ENCODE measurements at regions of chr20 and their contacts with region 1.

Region 1: DNA sequence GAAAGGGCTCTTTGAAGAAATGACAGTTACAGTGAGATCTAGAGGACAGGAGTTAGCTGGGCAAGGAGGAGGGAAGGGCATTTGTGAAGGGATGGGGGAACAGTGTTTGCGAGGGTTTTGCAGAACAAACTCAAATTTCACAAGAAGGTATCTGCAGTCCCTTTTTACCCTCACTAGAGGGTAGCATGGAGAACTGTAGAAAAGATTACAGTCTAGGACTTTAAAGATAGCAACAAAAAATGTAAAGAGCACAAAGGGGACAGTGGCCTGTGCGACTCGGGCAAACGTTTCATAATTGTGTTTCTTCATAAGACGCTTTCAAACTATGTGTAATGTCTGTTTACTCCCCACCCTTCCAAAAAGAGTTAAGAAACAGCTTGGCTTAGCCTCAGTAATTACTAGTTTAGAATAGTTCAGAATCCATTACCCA is 21.2 kb upstream of the ASXL1 start:
- DNase-seq: no peak
- ATAC-seq: no peak
- H3K4me3 ChIP-seq: no peak overlapping the region
- H3K27ac ChIP-seq: no peak overlapping the region
- H3K4me1 ChIP-seq: peaks cover 4 to 46% (median 28%) of the 10 kb centered on the region in 12 donors
- H3K27me3 ChIP-seq: no peaks in the 10 kb centered on the region
- CTCF ChIP-seq: peak; percentile 30 to 67 (median 49)
- POLR2A ChIP-seq: no peak

Region 2: DNA sequence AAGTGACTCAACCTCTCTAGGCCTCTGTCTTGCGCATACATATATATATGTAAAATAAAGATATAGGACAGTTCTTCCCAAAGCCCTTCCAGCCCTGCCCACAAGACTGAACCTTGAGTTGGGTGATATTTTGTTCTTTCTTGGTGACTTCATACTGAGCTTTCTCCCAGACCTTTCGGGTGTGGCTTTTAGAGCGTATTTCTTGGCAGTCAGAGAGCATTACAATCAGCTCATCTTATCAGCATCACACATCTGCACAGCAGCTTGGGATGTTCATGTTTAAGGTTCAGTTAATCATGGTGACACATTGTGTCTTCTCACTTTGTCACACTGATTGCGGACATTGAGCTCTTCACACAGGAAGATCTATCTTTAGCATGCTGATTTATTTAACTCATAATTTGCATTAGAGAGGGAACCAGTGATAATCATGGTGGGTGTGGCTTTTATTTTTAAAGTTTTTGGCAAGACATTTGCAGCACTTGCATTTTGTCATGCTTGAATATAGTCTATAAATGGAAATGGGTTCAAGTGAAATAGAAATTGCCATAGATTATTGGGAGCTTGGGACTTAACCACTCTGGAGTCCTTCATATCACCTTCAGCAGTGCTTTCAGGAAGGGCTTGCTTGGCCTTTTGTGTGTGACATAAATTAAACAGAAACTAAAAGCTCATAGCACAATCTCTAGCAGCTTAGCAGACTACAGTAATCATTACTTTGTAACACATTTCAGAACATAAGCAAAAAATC is 51.1 kb before region 1 on chr20:
- intact Hi-C with region 1: loop called in 3 of 10 experiments (anchors 5 to 10 kb)
- DNase-seq: peak in 2 of 5 donors; percentile 13 to 20
- ATAC-seq: peak; percentile 62 to 84 (median 64)
- H3K4me3 ChIP-seq: peak overlapping the region in 4 of 12 donors; percentile 1 to 10 (median 9)
- H3K27ac ChIP-seq: peak overlapping the region in 11 of 12 donors; percentile 45 to 82 (median 61)
- H3K4me1 ChIP-seq: peaks cover 3 to 39% (median 26%) of the 10 kb centered on the region in 12 donors
- H3K27me3 ChIP-seq: no peaks in the 10 kb centered on the region
- CTCF ChIP-seq: no peak
- POLR2A ChIP-seq: no peak

Region 3: DNA sequence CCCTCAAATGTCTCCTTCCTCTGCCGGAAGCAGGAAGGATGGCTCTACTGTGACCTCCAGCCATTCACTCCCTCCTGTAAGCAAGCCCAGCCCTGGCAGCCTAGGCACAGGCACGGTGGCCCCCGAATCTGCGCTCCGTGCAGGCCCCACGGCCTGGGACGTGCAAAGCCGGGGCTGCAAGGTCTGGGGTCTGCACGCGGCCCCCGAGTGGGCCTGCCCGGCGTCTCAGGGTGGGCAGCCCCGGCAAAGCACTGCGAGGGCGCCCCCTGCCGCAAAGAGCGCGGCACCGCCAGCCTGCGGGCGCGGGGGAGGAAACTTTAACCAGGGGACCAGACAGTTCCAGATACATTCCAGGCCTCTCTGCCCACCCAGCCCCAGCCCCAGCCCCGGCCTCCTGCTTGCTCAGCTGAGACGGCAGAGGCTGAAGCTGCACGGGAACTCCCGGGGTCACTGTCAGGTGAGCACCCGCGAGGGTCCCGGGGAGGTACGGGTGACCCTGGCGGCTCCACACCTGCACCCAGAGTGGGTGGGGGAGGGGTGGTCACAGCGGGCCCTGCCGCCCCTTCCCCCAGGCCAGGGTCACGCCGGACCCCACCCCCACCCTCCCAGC is 120.0 kb after region 1 on chr20:
- intact Hi-C with region 1: loop called in 5 of 10 experiments (anchors 2 to 10 kb)
- DNase-seq: peak in 2 of 5 donors; percentile 55 to 69
- ATAC-seq: peak; percentile 45 to 74 (median 56)
- H3K4me3 ChIP-seq: peak overlapping the region; percentile 19 to 72 (median 55)
- H3K27ac ChIP-seq: peak overlapping the region in 4 of 12 donors; percentile 24 to 64 (median 42)
- H3K4me1 ChIP-seq: peaks cover 0 to 22% (median 16%) of the 10 kb centered on the region in 12 donors
- H3K27me3 ChIP-seq: no peaks in the 10 kb centered on the region
- CTCF ChIP-seq: peak; percentile 65 to 88 (median 82)
- POLR2A ChIP-seq: no peak

Region 4: DNA sequence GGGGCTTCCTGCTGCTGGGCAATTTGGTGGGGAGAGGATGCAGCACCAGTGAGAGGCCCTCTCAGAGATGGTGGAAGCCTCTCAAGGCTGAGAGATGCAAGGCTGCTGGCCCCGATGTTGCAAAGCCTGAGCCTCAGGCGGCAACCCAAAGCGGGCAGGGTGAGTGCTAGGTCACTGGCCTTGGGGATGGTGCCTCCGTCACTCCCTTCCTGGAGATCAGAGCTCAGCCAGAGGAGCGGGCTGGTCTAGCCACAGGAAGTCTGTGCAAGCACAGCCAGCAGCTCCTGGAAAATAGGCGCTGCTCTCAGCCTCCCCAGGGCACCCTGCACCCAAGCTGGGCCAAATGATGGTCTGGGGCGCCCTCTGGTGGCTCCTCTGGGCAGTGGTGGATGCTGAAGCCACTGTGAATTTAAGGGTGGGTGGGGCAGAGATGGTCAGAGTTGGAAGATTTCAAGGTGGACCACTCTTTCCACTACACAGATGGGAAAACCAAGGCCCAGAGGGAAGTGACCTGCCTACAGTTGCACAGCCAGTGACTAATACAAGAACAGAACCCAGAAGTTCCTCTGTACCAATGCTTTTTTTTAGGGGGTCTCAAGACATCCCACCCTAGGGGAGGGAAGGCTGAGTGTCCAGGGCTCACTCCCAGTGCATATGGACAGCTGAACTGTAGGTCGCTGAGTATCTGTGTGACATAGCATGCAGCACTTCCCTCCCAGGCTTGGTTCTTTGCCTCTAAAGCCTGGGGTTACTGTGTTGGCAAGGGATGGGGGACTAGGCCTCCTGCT is 316.0 kb after region 1 on chr20:
- intact Hi-C with region 1: loop called in 2 of 10 experiments (anchors 10 kb)
- DNase-seq: peak; percentile 85 to 92 (median 86)
- ATAC-seq: peak; percentile 93 to 98 (median 97)
- H3K4me3 ChIP-seq: no peak overlapping the region
- H3K27ac ChIP-seq: no peak overlapping the region
- H3K4me1 ChIP-seq: peaks cover 0 to 5% (median 1%) of the 10 kb centered on the region in 12 donors
- H3K27me3 ChIP-seq: no peaks in the 10 kb centered on the region
- CTCF ChIP-seq: peak; percentile 90 to 96 (median 94)
- POLR2A ChIP-seq: no peak

Measured in heart left ventricle (tissue), 16 donors.